ENCODE measurements at regions of chr12 and their contacts with region 1.

Region 1: DNA sequence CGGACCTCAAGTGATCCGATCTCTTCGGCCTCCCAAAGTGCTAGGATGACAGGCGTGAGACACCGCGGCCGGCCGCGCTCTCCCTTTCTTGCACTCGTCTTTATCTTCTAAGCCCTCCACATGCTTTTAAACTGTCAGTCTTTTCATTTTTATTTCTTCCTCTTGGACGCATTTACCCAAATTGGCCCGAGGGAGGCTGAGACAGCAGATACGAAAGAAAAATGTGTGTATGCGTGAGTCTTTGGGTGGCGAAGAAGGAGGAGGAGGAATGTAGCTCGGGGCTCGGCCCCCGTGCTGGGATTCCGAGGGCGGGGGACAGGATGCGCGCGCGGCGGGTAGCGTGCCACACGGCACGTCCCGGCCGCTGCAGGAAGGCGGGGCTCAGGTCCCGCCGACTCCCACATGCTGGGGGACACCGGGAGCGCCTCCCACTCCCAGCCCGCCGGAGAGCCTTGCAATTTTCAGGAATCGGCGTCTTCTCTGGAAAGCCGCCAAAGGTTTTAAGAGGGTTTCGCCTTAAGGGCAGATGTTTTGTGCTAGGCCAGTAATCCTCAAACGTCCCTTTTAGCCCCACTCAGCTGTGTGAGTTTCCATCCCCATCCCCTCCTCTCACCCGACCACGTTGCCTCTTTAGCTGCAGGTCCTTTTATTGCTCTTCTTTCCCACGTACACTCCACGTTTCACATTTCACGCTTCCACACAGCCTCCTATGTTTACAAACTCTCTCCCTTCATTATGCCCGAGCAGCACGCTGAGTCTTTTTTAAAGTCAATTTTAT is 34.7 kb upstream of the SLC2A3 start:
- DNase-seq: peak; percentile 94
- ATAC-seq: peak; percentile 81
- H3K4me3 Mint-ChIP-seq: peak overlapping the region; percentile 80
- H3K27ac Mint-ChIP-seq: peak overlapping the region; percentile 99
- H3K4me1 Mint-ChIP-seq: peaks cover 31% of the 10 kb centered on the region
- H3K27me3 Mint-ChIP-seq: no peaks in the 10 kb centered on the region

Region 2: DNA sequence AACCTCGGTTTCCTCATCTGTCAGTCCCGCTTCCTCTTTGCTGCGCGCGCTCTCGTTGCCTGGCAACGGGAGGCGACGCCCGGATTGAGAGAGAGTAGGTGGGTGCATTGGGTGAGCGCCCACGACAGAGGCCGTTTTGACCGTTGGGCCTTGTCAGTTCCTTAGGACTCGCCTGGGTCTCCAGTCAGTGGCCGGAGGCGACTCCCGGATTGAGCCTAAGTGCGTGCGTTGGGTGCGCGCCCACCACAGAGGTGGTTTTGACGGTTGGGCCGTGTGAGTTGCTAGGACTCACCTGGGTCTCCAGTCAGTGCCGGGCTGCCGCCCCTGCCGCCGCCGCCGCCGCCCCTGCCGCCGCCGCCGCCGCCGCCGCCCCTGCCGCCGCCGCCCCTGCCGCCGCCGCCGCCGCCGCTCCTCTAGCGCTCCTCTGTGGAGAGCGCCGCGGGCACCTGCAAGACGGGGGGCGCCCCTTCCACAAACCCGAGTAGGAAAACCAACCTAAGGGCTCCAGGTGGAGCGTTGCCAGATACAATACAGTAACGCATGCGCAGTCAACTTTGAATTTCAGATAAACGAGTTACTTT is 342.2 kb before region 1 on chr12:
- CTCF ChIA-PET with region 1: no interaction called
- POLR2A ChIA-PET with region 1: no interaction called
- intact Hi-C with region 1: no loop called
- DNase-seq: peak; percentile 10
- ATAC-seq: no peak
- H3K4me3 Mint-ChIP-seq: no peak overlapping the region
- H3K27ac Mint-ChIP-seq: no peak overlapping the region
- H3K4me1 Mint-ChIP-seq: no peaks in the 10 kb centered on the region
- H3K27me3 Mint-ChIP-seq: peaks cover 10% of the 10 kb centered on the region

Region 3: GRCh38 chr12:7884689-7885088 is 86.0 kb before region 1 on chr12:
- CTCF ChIA-PET with region 1: no interaction called
- POLR2A ChIA-PET with region 1: no interaction called
- intact Hi-C with region 1: no loop called
- DNase-seq: no peak
- ATAC-seq: no peak
- H3K4me3 Mint-ChIP-seq: no peak overlapping the region
- H3K27ac Mint-ChIP-seq: no peak overlapping the region
- H3K4me1 Mint-ChIP-seq: no peaks in the 10 kb centered on the region
- H3K27me3 Mint-ChIP-seq: no peaks in the 10 kb centered on the region

Region 4: DNA sequence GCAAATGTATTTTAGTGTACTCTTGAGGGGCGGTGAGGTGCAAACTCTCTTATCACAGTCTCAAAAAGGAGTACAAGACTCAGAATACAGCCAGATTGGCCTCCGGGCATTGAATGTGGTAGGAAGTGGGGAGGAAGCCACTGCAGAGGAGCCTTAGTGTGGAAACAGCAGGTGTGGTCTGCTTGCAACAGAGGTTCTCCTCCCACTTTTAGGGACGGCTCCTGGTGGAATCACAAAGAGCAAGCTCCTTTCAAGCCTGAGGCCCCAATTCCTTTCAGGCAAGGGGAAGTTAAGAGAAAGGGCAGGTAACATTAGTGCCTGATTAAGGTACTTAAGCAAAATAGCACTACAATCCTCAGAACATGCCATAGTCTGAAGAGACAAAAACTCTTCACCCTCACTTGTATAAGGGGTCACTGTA is 11.0 kb before region 1 on chr12:
- CTCF ChIA-PET with region 1: interaction called, 38 read pairs
- POLR2A ChIA-PET with region 1: interaction called, 14 read pairs
- intact Hi-C with region 1: loop called (anchors 1 kb)
- DNase-seq: peak; percentile 60
- ATAC-seq: peak; percentile 34
- H3K4me3 Mint-ChIP-seq: peak overlapping the region; percentile 86
- H3K27ac Mint-ChIP-seq: peak overlapping the region; percentile 94
- H3K4me1 Mint-ChIP-seq: peaks cover 30% of the 10 kb centered on the region
- H3K27me3 Mint-ChIP-seq: no peaks in the 10 kb centered on the region

Region 5: GRCh38 chr12:7989827-7990551 is 19.3 kb after region 1 on chr12:
- CTCF ChIA-PET with region 1: interaction called, 5 read pairs
- POLR2A ChIA-PET with region 1: interaction called, 4 read pairs
- intact Hi-C with region 1: loop called (anchors 1 kb)
- DNase-seq: peak; percentile 94
- ATAC-seq: peak; percentile 92
- H3K4me3 Mint-ChIP-seq: peak overlapping the region; percentile 62
- H3K27ac Mint-ChIP-seq: peak overlapping the region; percentile 90
- H3K4me1 Mint-ChIP-seq: peaks cover 42% of the 10 kb centered on the region
- H3K27me3 Mint-ChIP-seq: no peaks in the 10 kb centered on the region